GM18951 (cell line): ENCODE measurements at regions of chr3 and their contacts with region 1.

Region 1: GRCh38 chr3:105868742-105869530 is at the start of gene CBLB:
- POLR2A ChIP-seq: peak; percentile 59

Region 2: DNA sequence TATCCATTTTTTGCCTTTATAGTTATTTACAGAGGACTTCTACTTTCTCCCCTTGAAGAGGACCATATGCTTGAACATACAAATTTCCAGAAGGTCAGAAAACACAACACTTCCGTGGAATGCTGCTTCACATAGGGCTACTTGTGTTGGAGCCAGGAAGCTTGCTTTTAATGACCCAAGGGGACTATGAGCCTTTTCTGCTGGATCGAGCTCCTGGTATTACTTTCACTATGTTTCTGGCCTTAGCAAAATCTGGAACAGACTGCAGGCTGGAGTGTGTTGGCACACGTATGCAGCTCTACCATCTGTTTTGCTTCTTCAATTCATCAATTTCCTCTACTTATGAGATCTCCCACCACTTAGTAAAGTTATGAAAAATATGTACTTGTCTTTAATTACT is 69.2 kb after region 1 on chr3:
- in situ Hi-C with region 1: no loop called
- POLR2A ChIP-seq: no peak

Region 3: DNA sequence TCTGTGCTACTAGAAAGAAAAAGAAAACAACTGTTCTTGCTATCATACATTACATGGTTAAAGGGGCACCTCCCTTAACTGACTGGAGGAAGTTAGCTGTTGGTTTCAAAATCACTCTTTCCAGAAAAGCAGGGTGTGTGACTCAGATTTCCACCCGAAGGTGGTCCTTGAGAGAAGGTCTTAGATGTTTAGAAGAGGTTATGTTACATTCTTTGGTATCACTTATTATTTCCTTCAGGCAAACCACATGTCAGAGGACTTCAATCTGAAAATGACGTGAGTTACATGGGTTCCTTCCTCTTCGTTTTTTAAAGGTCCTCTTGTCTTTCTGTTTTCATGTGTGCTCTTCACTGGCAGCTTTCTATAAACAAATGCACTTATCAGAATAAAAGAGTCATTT is 307.8 kb after region 1 on chr3:
- in situ Hi-C with region 1: loop called (anchors 25 kb)
- POLR2A ChIP-seq: no peak